BJ (cell line): ENCODE measurements at regions of chr3 and their contacts with region 1.

Region 1: GRCh38 chr3:14508961-14509795 is 31.0 kb downstream of the GRIP2 start:
- DNase-seq: no peak
- H3K4me3 ChIP-seq: no peak overlapping the region; the same call in 1 of the 2 replicates
- H3K27me3 ChIP-seq: peaks cover 2% of the 10 kb centered on the region; the same call in 1 of the 2 replicates
- CTCF ChIP-seq: peak; percentile 93

Region 2: DNA sequence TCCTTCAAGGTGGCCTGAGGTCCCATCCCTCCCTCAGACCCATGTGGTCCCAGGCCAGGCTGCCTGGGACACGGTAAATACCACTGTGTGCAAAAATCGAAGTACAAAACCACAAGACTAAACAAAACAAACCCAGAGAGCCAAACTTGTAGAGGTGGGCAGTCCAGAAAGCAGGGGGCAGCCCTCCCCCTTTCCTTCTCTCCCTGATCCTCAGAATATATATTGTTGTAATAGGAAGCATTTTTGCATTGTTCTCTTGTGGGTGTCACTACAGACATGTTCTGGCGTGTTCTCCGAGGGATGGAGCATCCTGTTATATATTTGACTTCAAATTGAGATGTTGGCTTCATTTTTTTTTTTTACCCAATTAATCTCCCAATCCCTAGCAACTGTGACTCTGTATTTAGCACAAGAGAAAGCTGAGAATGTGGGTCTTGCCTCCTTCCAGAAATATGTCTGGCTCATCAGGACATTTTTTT is 20.6 kb before region 1 on chr3:
- CTCF ChIA-PET with region 1: interaction called, 12 read pairs
- POLR2A ChIA-PET with region 1: no interaction called
- DNase-seq: no peak
- H3K4me3 ChIP-seq: no peak overlapping the region
- H3K27me3 ChIP-seq: no peaks in the 10 kb centered on the region
- CTCF ChIP-seq: no peak

Region 3: DNA sequence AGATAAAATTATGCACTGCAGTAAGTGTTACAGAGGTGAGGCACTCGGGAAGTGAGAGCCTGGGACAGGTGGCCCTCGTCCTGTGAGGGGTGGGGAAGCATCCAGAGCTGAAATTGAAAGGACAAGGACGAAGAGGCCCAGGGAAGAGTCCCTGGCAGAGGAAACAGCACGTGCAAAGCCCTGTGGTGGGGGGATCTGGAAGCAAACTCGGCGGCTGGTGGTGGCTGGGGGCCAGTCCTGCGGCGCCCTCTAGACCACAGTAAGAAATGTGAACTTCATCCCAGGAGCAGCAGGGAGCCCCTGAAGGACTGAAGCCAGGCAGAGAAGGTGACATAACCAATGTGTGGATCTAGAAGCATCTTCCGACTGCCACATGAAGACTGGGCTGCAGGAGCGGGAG is 11.9 kb before region 1 on chr3:
- CTCF ChIA-PET with region 1: interaction called, 24 read pairs
- POLR2A ChIA-PET with region 1: no interaction called
- DNase-seq: no peak
- H3K4me3 ChIP-seq: no peak overlapping the region
- H3K27me3 ChIP-seq: no peaks in the 10 kb centered on the region; the same call in 1 of the 2 replicates
- CTCF ChIP-seq: no peak

Region 4: DNA sequence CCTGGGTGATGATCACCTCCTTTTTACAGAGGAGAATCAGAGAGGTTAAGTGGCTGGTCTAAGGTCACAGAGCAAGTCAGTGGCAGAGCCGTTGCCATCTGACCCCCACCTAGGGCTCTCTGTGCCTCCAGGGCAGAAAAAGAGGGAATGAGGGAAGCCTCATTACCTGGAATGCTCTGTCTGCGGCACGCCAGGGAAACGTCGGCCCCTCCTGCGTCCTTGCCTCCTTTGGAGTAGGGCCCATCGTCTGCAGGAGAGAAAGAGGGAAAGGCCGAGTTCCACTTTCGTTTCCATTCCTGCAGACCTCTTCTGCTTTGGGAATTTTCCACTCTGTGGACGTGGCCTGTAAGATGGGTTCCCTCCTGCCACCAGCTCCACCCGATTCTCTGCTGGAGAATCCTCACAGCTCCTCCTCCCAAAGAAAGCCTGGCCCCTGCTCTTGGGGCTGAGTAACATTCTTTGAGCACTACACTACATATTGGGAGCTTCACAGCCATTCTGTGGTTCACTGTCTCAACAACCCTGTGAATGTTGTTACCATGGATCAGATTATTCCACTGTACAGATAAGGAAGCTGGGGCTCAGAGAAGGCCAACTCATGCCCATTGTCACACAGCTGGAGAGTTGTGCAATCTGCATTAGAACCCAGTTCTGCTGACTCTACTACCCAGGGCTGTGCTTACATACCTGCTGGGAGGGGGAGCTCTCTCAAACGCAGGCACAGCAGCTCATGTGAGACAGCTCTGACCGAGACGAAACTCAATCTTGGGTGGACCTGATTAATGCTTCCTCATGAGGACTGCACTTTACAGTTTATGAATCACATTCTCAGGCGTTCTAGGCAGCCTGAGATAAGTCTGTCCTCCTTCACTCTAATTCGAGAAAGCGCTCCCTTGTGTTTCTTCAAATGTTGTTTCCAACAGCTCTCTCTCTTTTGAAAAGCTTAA is 16.8 kb after region 1 on chr3:
- CTCF ChIA-PET with region 1: interaction called, 38 read pairs
- POLR2A ChIA-PET with region 1: no interaction called
- DNase-seq: peak; percentile 18
- H3K4me3 ChIP-seq: peak overlapping the region; percentile 14; the same call in 1 of the 2 replicates
- H3K27me3 ChIP-seq: no peaks in the 10 kb centered on the region; the same call in 1 of the 2 replicates
- CTCF ChIP-seq: no peak

Region 5: DNA sequence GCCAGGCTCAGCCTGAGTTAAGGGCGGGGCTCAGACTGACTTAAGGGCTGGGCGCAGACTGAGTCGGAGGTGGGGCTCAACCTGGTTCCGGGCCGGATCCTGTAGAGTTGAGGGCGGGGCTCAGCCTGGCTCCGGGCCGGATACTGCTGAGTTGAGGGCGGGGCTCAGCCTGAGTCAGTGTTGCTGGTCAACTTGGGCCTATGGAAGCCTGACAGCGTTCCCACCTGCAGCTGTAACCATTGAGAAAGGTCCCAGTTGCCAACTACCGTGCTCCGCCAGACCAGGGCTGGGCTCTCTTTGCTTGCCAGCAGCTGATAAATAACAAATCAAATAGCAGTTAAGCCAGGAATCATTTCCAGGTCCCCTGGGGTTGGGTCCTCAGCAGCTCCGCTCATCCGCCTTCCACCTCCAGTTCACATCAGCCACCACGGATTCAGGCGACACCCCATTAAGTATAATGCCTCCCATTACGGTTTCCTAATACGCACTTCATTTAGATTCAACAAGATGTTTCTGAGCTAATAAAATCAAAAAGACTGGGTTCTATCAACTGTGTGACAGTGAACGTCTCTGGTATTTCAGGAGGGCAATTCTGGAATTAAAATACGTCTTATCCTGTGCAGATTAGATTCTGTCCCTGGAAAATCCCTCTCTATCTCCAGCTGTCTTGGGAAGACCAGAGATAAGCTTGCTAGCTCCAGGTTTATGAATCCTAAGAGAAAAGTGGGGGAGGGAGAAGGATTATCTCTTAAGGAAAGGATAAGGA is 23.7 kb after region 1 on chr3:
- CTCF ChIA-PET with region 1: interaction called, 15 read pairs
- POLR2A ChIA-PET with region 1: no interaction called
- DNase-seq: no peak
- H3K4me3 ChIP-seq: no peak overlapping the region
- H3K27me3 ChIP-seq: peaks cover 4% of the 10 kb centered on the region; the same call in 1 of the 2 replicates
- CTCF ChIP-seq: no peak

Region 6: GRCh38 chr3:14548321-14548729 is 39.1 kb after region 1 on chr3:
- CTCF ChIA-PET with region 1: interaction called, 64 read pairs
- POLR2A ChIA-PET with region 1: no interaction called
- DNase-seq: no peak
- H3K4me3 ChIP-seq: no peak overlapping the region
- H3K27me3 ChIP-seq: peaks cover 7% of the 10 kb centered on the region
- CTCF ChIP-seq: peak; percentile 84

Region 7: DNA sequence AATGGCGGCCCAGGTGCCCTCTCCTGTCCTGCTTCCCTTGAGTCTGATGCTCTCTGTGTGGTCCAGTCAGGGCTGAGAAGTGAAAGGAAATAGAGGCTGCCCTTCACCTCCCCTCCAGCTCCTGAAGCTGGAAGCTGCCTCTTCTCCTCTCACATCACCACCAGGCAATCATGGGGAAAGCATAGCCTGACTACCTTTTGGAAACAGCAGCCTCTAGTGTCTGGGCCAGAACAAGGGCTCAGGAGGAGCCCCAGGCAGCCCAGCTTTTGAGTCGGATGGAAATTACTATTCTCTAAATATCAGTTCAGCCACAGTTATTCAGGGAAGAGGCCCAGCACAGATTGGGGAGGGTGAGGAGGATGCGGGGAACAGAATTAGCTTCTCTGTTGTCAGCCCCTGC is 99.1 kb after region 1 on chr3:
- CTCF ChIA-PET with region 1: no interaction called
- POLR2A ChIA-PET with region 1: no interaction called
- DNase-seq: no peak
- H3K4me3 ChIP-seq: no peak overlapping the region
- H3K27me3 ChIP-seq: peaks cover 14% of the 10 kb centered on the region
- CTCF ChIP-seq: no peak

Region 8: DNA sequence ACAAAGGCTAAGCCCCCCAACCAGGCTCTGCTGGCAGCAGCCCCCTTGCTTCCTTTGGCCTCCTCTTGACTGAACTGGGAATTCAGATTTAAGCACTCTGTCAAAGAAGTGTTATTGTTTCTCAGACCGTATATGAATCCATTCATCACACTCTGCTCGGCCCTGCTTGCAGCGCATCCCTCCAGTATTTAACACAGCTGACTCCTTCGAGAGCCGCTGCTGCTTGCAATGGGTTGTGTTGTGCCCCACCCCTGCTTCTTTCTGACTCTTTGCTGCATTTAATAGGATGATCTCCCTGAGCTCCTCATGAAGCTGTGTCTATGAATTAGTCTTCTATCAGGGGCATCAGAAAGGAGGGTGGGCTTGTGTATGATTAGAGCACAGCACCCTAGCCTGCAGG is 196.9 kb after region 1 on chr3:
- CTCF ChIA-PET with region 1: no interaction called
- POLR2A ChIA-PET with region 1: no interaction called
- DNase-seq: no peak
- H3K4me3 ChIP-seq: no peak overlapping the region
- H3K27me3 ChIP-seq: no peaks in the 10 kb centered on the region
- CTCF ChIP-seq: no peak

Region 9: GRCh38 chr3:14803981-14804834 is 295.0 kb after region 1 on chr3:
- CTCF ChIA-PET with region 1: no interaction called
- POLR2A ChIA-PET with region 1: no interaction called
- DNase-seq: no peak
- H3K4me3 ChIP-seq: no peak overlapping the region
- H3K27me3 ChIP-seq: peaks cover 2% of the 10 kb centered on the region
- CTCF ChIP-seq: no peak